MCF 10A (cell line): ENCODE measurements at regions of chr10 and their contacts with region 1.

Region 1: DNA sequence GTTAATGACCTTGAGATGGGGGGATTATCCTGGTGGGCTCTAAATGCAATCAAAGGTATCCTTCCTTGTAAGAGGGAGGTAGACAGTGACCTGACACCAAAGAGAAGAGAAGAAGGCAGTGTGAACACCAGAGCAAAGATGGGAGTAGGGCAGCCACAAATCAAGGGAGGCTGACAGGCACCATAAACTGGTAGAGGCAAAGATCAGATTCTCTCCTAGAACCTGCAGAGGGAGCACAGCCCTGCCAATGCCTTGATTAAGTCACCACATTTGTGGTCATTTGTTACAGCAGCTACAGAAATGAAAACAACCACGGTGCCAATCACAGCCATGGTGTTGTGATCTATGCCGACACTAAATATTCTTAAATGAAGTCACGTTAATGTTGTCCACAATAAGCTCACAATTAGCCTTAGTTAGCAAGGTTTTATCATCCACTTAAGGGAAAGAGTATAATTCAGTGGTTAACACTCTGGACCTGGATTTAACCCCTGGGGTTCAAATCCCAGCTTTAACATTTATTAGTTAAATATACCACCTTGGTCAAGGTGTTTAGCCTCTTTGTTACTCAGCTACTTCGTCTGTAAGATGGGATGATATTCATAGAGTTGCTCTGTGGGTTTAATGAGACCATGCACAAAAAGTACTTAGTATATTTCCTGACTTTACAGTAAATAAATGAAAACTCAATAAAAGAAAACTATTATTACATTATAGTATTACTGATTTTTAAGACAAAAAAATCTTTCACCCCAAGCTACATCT is 70.8 kb downstream of the SGMS1 start:
- DNase-seq: peak; percentile 66
- H3K4me3 Mint-ChIP-seq: no peak overlapping the region
- H3K27ac Mint-ChIP-seq: peak overlapping the region; percentile 14
- H3K4me1 Mint-ChIP-seq: peaks cover 6% of the 10 kb centered on the region
- H3K27me3 Mint-ChIP-seq: no peaks in the 10 kb centered on the region
- CTCF ChIP-seq: peak; percentile 28

Region 2: DNA sequence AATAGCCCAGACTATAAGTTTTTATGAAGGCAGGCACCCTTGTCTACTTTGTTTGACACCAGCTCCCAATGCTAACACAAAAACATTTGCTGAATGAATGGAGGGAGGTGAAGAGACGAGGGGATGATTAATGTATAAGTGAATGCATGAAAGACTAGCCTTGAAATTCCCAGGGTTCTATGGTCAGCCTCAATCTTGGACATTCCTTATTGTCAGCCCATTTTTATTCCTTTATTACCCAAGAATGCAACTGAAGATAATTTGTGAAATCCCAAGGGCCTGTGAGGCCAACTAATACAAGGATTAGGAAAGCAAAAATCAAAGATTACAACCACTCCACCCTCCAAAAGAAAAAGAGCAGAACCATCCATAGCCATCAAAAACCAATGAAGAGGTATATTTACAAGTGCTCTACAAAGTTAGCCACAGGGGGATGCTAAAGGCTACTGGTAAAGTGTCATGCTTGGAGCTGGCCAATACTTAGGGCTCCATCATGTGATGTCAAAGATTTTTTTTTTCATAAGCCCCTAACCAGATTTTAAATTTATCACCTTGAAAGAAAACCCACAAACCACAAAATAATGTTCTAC is 261.6 kb before region 1 on chr10:
- CTCF ChIA-PET with region 1: no interaction called
- POLR2A ChIA-PET with region 1: no interaction called
- intact Hi-C with region 1: loop called (anchors 10 kb)
- DNase-seq: peak; percentile 31
- H3K4me3 Mint-ChIP-seq: no peak overlapping the region
- H3K27ac Mint-ChIP-seq: no peak overlapping the region
- H3K4me1 Mint-ChIP-seq: peaks cover 4% of the 10 kb centered on the region
- H3K27me3 Mint-ChIP-seq: no peaks in the 10 kb centered on the region
- CTCF ChIP-seq: peak; percentile 29

Region 3: DNA sequence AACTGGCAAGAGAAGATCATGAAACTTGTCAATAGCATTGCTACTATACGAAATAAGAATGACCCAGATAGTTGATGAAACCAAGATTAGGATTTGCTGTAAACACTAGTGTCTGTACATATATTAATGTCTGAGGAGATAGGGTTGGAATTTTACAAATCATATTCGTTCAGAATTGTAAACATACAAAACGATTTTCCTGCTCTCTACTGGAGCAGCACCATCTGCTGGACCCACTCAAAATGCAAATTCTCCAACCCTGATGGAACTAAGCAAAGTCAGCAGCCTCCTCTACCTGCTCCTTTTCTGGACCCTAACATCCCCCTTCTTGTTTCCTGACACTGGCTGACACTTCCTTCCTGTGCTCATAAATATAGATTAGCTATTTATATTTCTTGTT is 100.2 kb after region 1 on chr10:
- CTCF ChIA-PET with region 1: interaction called, 13 read pairs
- POLR2A ChIA-PET with region 1: no interaction called
- intact Hi-C with region 1: no loop called
- DNase-seq: peak; percentile 31
- H3K4me3 Mint-ChIP-seq: no peak overlapping the region
- H3K27ac Mint-ChIP-seq: no peak overlapping the region
- H3K4me1 Mint-ChIP-seq: peaks cover 10% of the 10 kb centered on the region
- H3K27me3 Mint-ChIP-seq: no peaks in the 10 kb centered on the region
- CTCF ChIP-seq: peak; percentile 47

Region 4: DNA sequence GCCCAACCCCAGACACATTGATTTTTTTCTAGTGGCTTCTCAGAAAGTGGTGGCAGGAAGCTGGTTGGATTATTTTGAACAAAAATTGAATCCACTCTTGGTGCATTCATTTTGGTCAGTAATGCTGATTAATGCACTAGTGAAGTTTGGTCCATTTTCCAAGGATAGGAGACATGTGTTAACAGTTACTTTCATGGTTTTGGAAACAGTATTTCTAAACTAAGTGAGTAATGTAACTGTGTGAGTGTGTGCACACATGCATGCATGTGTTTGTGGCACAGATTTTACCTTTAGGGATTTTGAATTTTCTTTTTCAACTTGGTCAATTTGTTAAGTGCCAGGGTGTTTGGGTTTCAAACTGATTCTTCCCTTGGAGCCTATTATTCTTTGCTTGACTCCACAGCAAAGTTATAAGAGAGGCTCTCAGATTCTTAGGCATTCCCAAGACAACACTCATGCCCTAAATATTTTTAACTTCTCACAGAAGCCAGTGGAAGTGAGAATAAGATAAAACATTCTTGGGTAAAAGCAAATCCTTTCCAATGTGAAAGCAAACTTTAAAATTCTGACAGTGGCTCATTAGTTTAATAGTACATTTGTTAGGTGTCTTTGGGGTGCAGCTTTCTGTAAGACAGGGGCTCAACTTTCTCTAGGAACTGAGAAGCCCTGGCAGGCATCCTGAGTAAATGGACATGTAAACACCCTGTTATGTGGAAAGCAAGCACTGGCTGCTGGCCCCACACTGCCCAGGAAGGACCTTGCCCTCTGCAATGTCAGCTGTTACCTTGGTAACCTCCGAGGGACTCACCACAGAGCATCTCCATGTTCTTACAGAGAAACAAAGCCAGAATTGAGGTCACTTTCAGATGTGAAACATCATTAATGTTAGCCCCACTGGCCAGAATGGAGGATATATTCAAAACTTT is 255.2 kb after region 1 on chr10:
- CTCF ChIA-PET with region 1: no interaction called
- POLR2A ChIA-PET with region 1: no interaction called
- intact Hi-C with region 1: no loop called
- DNase-seq: no peak
- H3K4me3 Mint-ChIP-seq: no peak overlapping the region
- H3K27ac Mint-ChIP-seq: no peak overlapping the region
- H3K4me1 Mint-ChIP-seq: no peaks in the 10 kb centered on the region
- H3K27me3 Mint-ChIP-seq: peaks cover 28% of the 10 kb centered on the region
- CTCF ChIP-seq: no peak